A549 (cell line): ENCODE measurements at regions of chr13 and their contacts with region 1.

Region 1: GRCh38 chr13:101757446-101758039 is 305.1 kb downstream of the ITGBL1 start:
- DNase-seq: peak; percentile 28 to 45
- ATAC-seq: peak; percentile 73 to 82; a peak in 4 of 6 replicates
- H3K4me3 ChIP-seq: no peak overlapping the region
- H3K27ac ChIP-seq: no peak overlapping the region
- H3K4me1 ChIP-seq: peaks cover 5% of the 10 kb centered on the region; the same call in 2 of the 3 replicates
- CTCF ChIP-seq: peak; percentile 70
- EP300 ChIP-seq: no peak
- POLR2A ChIP-seq: no peak
- RAD21 ChIP-seq: peak; percentile 85 to 86

Region 2: GRCh38 chr13:101514788-101515187 is 242.8 kb before region 1 on chr13:
- CTCF ChIA-PET with region 1: interaction called, 19 read pairs
- POLR2A ChIA-PET with region 1: no interaction called
- DNase-seq: peak; percentile 2 to 67
- ATAC-seq: peak; percentile 66 to 79; a peak in 3 of 6 replicates
- H3K4me3 ChIP-seq: no peak overlapping the region
- H3K27ac ChIP-seq: no peak overlapping the region
- H3K4me1 ChIP-seq: peaks cover 3% of the 10 kb centered on the region; the same call in 1 of the 3 replicates
- CTCF ChIP-seq: peak; percentile 75
- EP300 ChIP-seq: no peak
- POLR2A ChIP-seq: no peak
- RAD21 ChIP-seq: peak; percentile 80 to 87

Region 3: GRCh38 chr13:101747039-101747438 is 10.5 kb before region 1 on chr13:
- CTCF ChIA-PET with region 1: interaction called, 11 read pairs
- POLR2A ChIA-PET with region 1: no interaction called
- DNase-seq: no peak
- ATAC-seq: no peak
- H3K4me3 ChIP-seq: no peak overlapping the region
- H3K27ac ChIP-seq: peak overlapping the region; percentile 8 to 15; a peak in 2 of 6 replicates
- H3K4me1 ChIP-seq: peaks cover 13% of the 10 kb centered on the region; the same call in 2 of the 3 replicates
- CTCF ChIP-seq: no peak
- EP300 ChIP-seq: no peak
- POLR2A ChIP-seq: no peak
- RAD21 ChIP-seq: no peak